Activated T-helper 1 cell treated with anti-CD3 and anti-CD28 coated beads, Interleukin-12 subunit alpha, Interleukin-12 subunit beta, Interleukin-2, Interleukin-4 antibody, amounts not matched to agents 30 ng/mL and 10 ng/mL and 1 ng/mL, durations not matched to agents 14 hours and 24 hours and 36 hours (primary cell): ENCODE measurements at regions of chr3 and their contacts with region 1.

Region 1: DNA sequence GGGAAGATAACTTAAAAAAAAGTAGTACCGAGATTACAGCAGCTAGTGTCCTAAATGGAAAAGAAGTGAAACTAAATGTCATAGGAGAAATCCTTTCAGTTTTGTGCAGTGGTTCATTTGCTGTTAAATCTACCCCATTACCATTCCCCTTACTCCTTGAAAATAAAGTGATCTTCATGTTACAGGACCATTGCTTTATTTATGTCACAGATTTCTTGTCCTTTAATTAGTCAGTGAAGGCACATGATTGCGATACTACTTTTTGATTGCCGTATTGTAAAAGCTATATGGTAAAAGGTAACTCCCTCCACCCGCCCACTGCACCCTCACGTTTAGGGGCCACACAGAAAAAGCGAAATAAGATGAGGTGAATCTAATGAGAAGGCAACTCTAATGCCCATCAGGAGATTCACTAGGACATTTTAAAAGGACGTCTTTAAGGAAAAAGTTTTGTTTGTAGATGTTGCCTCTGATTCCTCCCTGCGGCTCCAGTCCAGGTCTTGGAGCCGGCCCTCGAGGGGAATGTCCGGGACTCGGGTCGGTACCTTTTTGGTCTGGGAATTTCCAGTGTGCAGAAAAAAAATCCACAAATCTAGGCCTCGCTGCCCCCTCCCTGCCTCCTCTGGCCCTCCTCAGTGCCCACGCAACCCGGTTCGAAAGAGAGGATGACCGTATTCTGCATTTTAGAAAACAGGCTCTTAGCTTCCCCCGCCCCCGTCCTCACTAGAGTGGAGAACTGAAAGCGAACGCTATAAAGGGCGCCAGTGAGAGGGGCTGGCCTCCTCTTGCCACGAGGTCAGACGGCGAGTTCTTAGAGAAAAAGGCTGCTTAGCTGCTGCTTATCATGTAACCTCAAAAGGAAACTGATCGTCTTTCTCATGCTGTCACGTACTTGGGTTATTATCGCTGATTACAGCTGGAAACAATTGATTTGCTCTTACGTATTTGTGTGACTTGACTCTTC is 21.8 kb upstream of the NFKBIZ start:
- DNase-seq: peak; percentile 77
- H3K4me3 Mint-ChIP-seq: peak overlapping the region; percentile 93
- H3K27ac Mint-ChIP-seq: peak overlapping the region; percentile 90
- H3K4me1 Mint-ChIP-seq: peaks cover 63% of the 10 kb centered on the region
- H3K27me3 Mint-ChIP-seq: no peaks in the 10 kb centered on the region

Region 2: GRCh38 chr3:101518421-101518871 is 309.0 kb before region 1 on chr3:
- intact Hi-C with region 1: loop called (anchors 5 kb)
- DNase-seq: peak; percentile 63
- H3K4me3 Mint-ChIP-seq: peak overlapping the region; percentile 32
- H3K27ac Mint-ChIP-seq: peak overlapping the region; percentile 77
- H3K4me1 Mint-ChIP-seq: peaks cover 49% of the 10 kb centered on the region
- H3K27me3 Mint-ChIP-seq: no peaks in the 10 kb centered on the region

Region 3: GRCh38 chr3:101685870-101686412 is 141.6 kb before region 1 on chr3:
- intact Hi-C with region 1: loop called (anchors 2 kb)
- DNase-seq: no peak
- H3K4me3 Mint-ChIP-seq: peak overlapping the region; percentile 99
- H3K27ac Mint-ChIP-seq: peak overlapping the region; percentile 97
- H3K4me1 Mint-ChIP-seq: peaks cover 29% of the 10 kb centered on the region
- H3K27me3 Mint-ChIP-seq: no peaks in the 10 kb centered on the region

Region 4: DNA sequence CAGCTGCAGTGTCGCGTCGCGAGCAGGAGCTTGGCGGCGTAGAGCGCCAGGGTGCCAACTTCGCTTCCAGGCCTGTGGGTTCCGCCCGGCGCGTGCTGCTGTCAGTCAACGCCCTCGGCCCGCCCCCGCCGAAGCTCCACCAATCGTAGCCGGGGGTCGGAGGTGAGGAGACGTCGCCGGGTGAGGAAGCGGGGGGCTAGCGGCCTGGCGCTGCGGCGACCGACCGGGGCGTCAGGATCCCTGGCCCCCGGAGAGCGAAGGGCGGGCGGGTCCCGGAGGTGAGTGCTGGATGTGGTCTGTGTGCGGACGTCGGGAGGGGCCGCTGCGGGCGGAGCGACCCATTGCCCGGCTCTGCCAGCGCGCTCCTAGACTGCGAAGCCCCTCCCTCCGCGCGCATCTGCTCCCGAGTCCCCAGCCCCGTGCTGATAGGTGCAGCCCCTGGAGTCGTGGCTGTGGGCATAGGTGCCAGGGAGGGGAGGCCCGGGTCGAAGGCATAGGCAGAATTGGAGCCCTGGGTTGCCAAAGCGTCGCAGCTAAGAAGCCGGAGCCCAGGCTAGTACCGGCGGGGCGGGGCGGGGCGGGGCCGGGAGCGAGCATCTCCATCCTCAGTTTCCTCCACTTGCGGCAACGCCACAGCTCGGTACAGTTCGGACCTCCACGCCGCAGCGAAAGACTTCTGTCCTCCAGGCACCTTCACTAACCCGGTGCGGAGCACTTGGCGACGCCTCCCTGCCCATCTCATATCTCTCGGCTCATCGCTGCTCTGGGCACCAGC is 48.3 kb before region 1 on chr3 and contains the start of gene NXPE3:
- intact Hi-C with region 1: loop called (anchors 1 kb)
- DNase-seq: peak; percentile 92
- H3K4me3 Mint-ChIP-seq: peak within 1 kb of the TSS; percentile 96
- H3K27ac Mint-ChIP-seq: peak within 1 kb of the TSS; percentile 85
- H3K4me1 Mint-ChIP-seq: peaks cover 38% of the 10 kb centered on the region
- H3K27me3 Mint-ChIP-seq: no peaks in the 10 kb centered on the region
- total RNA-seq, gene NXPE3: 17.6 and 17.8 TPM in 2 replicates

Region 5: GRCh38 chr3:101861212-101861788 is 33.8 kb after region 1 on chr3:
- intact Hi-C with region 1: loop called (anchors 5 kb)
- DNase-seq: no peak
- H3K4me3 Mint-ChIP-seq: no peak overlapping the region
- H3K27ac Mint-ChIP-seq: peak overlapping the region; percentile 34
- H3K4me1 Mint-ChIP-seq: peaks cover 67% of the 10 kb centered on the region
- H3K27me3 Mint-ChIP-seq: no peaks in the 10 kb centered on the region

Region 6: GRCh38 chr3:101988591-101988990 is 161.1 kb after region 1 on chr3:
- intact Hi-C with region 1: loop called (anchors 1 kb)
- DNase-seq: no peak
- H3K4me3 Mint-ChIP-seq: no peak overlapping the region
- H3K27ac Mint-ChIP-seq: peak overlapping the region; percentile 47
- H3K4me1 Mint-ChIP-seq: peaks cover 44% of the 10 kb centered on the region
- H3K27me3 Mint-ChIP-seq: peaks cover 11% of the 10 kb centered on the region